Activated naive CD4-positive, alpha-beta T cell treated with anti-CD3 and anti-CD28 coated beads for 36 hours (primary cell): ENCODE measurements at regions of chr3 and their contacts with region 1.

Region 1: GRCh38 chr3:97719156-97719821 is 45.3 kb upstream of the ARL6 start:
- DNase-seq: peak; percentile 79
- H3K4me3 Mint-ChIP-seq: no peak overlapping the region
- H3K27ac Mint-ChIP-seq: no peak overlapping the region
- H3K4me1 Mint-ChIP-seq: no peaks in the 10 kb centered on the region
- H3K27me3 Mint-ChIP-seq: peaks cover 2% of the 10 kb centered on the region

Region 2: GRCh38 chr3:96863129-96863740 is 856.1 kb before region 1 on chr3:
- CTCF ChIA-PET with region 1: no interaction called
- intact Hi-C with region 1: loop called (anchors 1 kb)
- DNase-seq: peak; percentile 36
- H3K4me3 Mint-ChIP-seq: no peak overlapping the region
- H3K27ac Mint-ChIP-seq: no peak overlapping the region
- H3K4me1 Mint-ChIP-seq: no peaks in the 10 kb centered on the region
- H3K27me3 Mint-ChIP-seq: no peaks in the 10 kb centered on the region

Region 3: GRCh38 chr3:97705764-97706163 is 13.5 kb before region 1 on chr3:
- CTCF ChIA-PET with region 1: interaction called, 14 read pairs
- intact Hi-C with region 1: no loop called
- DNase-seq: no peak
- H3K4me3 Mint-ChIP-seq: no peak overlapping the region
- H3K27ac Mint-ChIP-seq: no peak overlapping the region
- H3K4me1 Mint-ChIP-seq: no peaks in the 10 kb centered on the region
- H3K27me3 Mint-ChIP-seq: peaks cover 3% of the 10 kb centered on the region

Region 4: DNA sequence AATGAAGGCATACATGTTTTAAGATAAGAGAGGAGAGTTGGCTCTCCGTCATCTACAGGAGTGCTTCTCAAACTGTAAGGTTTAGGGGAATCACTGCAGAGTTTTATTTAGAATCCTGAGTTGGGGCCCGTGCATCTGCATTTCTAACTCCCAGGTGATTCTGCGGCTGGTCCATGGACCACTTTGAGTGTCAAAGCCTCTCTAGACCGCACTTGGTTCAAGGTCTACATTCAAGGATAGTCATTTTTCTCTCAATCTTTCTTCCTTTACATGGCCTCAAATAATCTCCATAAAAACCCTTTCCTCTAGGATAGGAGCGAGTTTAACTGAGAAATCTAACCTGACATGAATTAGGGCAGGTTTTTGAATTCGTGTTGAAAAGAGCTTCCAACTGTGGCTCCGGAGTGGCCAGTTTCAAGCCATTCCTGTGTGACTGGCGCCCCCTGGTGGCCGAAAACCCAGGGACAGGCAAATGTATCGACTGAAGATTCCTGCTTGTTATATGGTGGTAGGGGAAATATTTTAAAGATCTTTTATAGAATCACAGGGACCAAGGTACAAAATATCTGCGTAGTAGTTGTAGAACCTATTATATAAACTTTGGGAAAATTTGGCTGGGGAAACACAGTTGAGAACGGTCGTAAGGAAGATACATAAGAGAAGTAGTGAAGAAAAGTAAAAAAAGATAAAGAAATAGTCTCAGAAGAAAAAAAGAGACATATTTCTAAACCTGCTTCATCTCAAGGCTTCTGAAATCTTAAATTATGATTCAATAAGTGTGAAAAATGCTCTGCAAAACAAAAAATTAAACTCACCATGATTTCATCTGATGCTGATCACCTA is 303.9 kb after region 1 on chr3:
- CTCF ChIA-PET with region 1: interaction called, 20 read pairs
- intact Hi-C with region 1: loop called (anchors 1 kb)
- DNase-seq: peak; percentile 96
- H3K4me3 Mint-ChIP-seq: no peak overlapping the region
- H3K27ac Mint-ChIP-seq: no peak overlapping the region
- H3K4me1 Mint-ChIP-seq: peaks cover 5% of the 10 kb centered on the region
- H3K27me3 Mint-ChIP-seq: no peaks in the 10 kb centered on the region